Activated B cell treated with CpG ODN at 0.5 μM for 24 hours (primary cell): ENCODE measurements at regions of chr15 and their contacts with region 1.

Region 1: GRCh38 chr15:80058851-80059785 is at the start of gene ZFAND6:
- DNase-seq: peak; percentile 98
- ATAC-seq: peak; percentile 83
- H3K4me3 Mint-ChIP-seq: peak within 1 kb of the TSS; percentile 92
- H3K27ac Mint-ChIP-seq: peak within 1 kb of the TSS; percentile 92
- H3K4me1 Mint-ChIP-seq: peaks cover 51% of the 10 kb centered on the region
- H3K27me3 Mint-ChIP-seq: no peaks in the 10 kb centered on the region
- CTCF ChIP-seq: no peak
- total RNA-seq, gene ZFAND6: 95.5 and 101 TPM in 2 replicates

Region 2: DNA sequence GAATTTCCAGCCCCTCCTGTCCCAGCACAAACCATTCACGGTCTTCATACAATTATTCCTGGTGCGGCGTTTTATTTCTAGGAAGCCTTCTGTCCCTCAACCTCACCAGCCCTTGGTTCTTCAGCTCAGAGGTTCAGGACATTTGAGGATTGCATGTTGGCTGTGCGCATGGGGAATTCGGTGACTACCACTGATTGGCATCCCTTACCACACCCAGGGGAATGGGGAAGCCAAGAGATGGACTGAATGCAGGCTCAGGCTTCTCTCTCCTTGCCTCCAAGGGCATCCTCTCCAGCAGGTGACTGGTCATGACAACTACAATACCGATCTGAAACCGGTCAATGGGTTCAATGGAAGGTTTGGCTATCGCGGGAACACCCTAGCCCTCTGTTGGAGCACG is 316.1 kb before region 1 on chr15:
- CTCF ChIA-PET with region 1: no interaction called
- POLR2A ChIA-PET with region 1: no interaction called
- intact Hi-C with region 1: no loop called
- DNase-seq: no peak
- ATAC-seq: no peak
- H3K4me3 Mint-ChIP-seq: no peak overlapping the region
- H3K27ac Mint-ChIP-seq: no peak overlapping the region
- H3K4me1 Mint-ChIP-seq: no peaks in the 10 kb centered on the region
- H3K27me3 Mint-ChIP-seq: peaks cover 2% of the 10 kb centered on the region
- CTCF ChIP-seq: no peak

Region 3: DNA sequence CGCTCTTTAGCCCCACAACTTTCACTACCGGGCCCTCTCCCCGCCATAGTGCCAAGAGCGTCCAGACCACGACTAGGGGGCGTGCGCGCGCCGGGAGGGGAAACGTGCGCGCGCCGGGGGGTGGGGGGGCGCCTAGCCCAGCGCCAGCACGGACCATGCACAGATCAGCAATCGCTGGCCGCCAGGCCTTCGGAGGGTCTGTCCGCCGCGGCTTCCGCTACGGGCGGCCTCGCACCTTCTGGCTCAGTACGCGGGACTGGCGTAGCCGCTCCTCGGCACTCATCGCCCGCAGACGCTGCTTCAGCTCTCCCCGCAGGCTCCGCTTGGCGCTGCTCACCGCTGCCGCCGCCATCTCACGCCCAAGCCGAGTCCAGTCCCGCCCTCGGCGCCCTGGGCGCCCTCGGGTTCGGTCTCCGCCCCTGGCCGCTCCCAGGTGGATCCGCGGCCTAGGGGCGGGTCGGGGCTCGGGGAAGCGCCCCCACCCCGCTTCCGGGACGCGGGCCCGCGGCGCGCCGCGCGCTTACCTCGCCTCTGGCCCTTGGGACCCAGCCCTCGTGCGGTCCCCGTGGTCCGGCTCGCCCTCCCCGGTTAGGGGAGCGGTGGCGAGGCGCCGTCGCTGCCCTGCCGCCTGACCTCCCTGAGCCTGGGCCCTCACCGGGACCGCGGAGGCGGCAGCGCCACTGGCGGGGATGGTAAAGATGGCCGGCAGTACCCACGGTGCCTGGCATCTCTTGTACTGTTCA is 162.3 kb before region 1 on chr15 and contains the start of gene MTHFS:
- CTCF ChIA-PET with region 1: no interaction called
- POLR2A ChIA-PET with region 1: interaction called, 4 read pairs
- intact Hi-C with region 1: loop called (anchors 2 kb)
- DNase-seq: peak; percentile 76
- ATAC-seq: peak; percentile 87
- H3K4me3 Mint-ChIP-seq: peak within 1 kb of the TSS; percentile 99
- H3K27ac Mint-ChIP-seq: peak within 1 kb of the TSS; percentile 100
- H3K4me1 Mint-ChIP-seq: peaks cover 54% of the 10 kb centered on the region
- H3K27me3 Mint-ChIP-seq: no peaks in the 10 kb centered on the region
- CTCF ChIP-seq: no peak
- total RNA-seq, gene MTHFS: 28.6 and 29.5 TPM in 2 replicates

Region 4: DNA sequence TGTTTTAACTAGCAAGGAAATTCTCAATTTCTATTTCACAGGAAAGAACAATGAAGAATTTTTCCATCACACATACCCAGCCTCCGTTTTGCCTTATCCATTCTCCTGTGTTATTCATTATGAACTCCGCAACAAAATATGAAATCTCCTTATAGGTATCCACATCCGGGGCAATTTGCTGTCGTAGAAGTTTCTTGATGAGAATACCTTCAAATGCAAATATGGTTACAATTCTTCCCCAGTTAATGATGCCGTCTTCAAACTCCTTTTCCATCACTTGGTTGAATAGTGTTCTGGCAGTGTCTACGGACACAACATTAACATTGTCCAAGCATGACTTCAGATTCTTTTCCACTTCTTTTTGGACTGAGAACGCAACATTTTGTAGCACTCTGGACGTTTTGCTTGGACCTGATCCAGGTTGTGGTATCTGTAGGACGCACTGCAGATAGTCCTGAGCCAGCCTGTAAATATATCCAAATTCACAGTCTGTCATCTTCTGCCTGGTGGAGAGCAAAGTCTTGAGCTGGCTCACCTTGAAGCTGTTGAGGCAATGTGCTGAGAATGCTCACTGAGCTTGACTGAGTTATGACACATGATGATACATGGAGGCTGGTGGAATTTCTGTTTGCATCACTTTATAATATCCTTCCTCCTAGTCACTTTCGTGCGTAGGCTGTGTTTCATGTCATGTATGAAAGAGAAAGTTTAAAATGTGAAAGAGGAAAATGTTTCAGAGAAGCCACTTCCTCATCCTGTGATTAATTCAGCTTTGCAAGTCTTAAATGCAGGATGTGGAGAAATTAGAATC is 88.3 kb before region 1 on chr15 and contains the start of gene BCL2A1:
- CTCF ChIA-PET with region 1: no interaction called
- POLR2A ChIA-PET with region 1: interaction called, 12 read pairs
- intact Hi-C with region 1: loop called (anchors 2 kb)
- DNase-seq: peak; percentile 33
- ATAC-seq: peak; percentile 83
- H3K4me3 Mint-ChIP-seq: peak within 1 kb of the TSS; percentile 89
- H3K27ac Mint-ChIP-seq: peak within 1 kb of the TSS; percentile 93
- H3K4me1 Mint-ChIP-seq: peaks cover 61% of the 10 kb centered on the region
- H3K27me3 Mint-ChIP-seq: no peaks in the 10 kb centered on the region
- CTCF ChIP-seq: no peak
- total RNA-seq, gene BCL2A1: 181 and 189 TPM in 2 replicates

Region 5: DNA sequence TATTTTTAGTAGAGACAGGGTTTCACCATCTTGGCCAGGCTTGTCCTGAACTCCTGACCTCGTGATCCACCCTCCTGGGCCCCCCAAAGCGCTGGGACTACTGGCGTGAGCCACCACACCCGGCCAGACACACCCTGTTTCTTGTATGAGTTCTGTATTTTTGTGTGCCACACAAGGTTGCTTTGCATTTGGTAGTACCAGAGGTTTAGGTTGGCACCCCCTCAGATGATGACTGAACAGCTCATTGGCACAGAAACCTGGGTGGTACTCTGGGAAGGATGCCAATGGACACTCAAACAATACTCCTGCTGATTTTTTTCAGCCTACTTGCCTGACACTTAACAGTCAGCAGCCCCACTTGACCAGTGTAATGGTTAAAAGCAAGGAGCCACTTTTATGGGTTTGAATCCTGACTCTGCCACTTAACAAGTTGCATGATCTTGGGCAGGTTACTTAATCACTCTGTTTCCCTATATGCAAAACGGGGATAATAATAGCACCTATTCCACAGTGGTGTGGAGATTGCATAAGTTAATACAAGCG is 48.9 kb before region 1 on chr15:
- CTCF ChIA-PET with region 1: interaction called, 3 read pairs
- POLR2A ChIA-PET with region 1: interaction called, 39 read pairs
- intact Hi-C with region 1: loop called (anchors 2 kb)
- DNase-seq: no peak
- ATAC-seq: peak; percentile 56
- H3K4me3 Mint-ChIP-seq: peak overlapping the region; percentile 57
- H3K27ac Mint-ChIP-seq: peak overlapping the region; percentile 87
- H3K4me1 Mint-ChIP-seq: peaks cover 73% of the 10 kb centered on the region
- H3K27me3 Mint-ChIP-seq: no peaks in the 10 kb centered on the region
- CTCF ChIP-seq: no peak

Region 6: GRCh38 chr15:80031841-80032240 is 27.3 kb before region 1 on chr15:
- CTCF ChIA-PET with region 1: no interaction called
- POLR2A ChIA-PET with region 1: interaction called, 29 read pairs
- intact Hi-C with region 1: no loop called
- DNase-seq: no peak
- ATAC-seq: peak; percentile 51
- H3K4me3 Mint-ChIP-seq: peak overlapping the region; percentile 55
- H3K27ac Mint-ChIP-seq: no peak overlapping the region
- H3K4me1 Mint-ChIP-seq: peaks cover 41% of the 10 kb centered on the region
- H3K27me3 Mint-ChIP-seq: no peaks in the 10 kb centered on the region
- CTCF ChIP-seq: no peak

Region 7: DNA sequence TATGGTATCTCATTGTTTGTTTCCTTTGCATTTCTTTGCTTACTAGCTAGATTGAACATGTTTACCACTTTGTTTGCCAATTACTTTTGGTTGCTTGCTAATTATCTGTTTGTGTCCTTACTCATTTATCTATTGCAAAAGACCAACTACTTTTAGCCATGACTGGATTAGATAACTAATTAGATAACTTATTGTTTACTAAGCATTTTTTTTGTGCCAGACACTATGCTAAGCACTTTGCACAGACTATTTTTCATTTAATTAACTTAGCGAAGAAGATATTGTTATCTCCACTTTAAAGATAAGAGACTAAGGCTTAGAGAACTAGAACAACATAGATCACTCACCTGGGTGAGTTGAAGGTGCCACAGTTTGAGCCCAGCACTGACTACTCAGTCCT is 16.6 kb before region 1 on chr15:
- CTCF ChIA-PET with region 1: no interaction called
- POLR2A ChIA-PET with region 1: no interaction called
- intact Hi-C with region 1: no loop called
- DNase-seq: no peak
- ATAC-seq: no peak
- H3K4me3 Mint-ChIP-seq: no peak overlapping the region
- H3K27ac Mint-ChIP-seq: no peak overlapping the region
- H3K4me1 Mint-ChIP-seq: no peaks in the 10 kb centered on the region
- H3K27me3 Mint-ChIP-seq: no peaks in the 10 kb centered on the region
- CTCF ChIP-seq: no peak

Region 8: GRCh38 chr15:80081390-80081789 is 22.3 kb after region 1 on chr15:
- CTCF ChIA-PET with region 1: no interaction called
- POLR2A ChIA-PET with region 1: interaction called, 11 read pairs
- intact Hi-C with region 1: loop called (anchors 2 kb)
- DNase-seq: no peak
- ATAC-seq: peak; percentile 96
- H3K4me3 Mint-ChIP-seq: no peak overlapping the region
- H3K27ac Mint-ChIP-seq: peak overlapping the region; percentile 16
- H3K4me1 Mint-ChIP-seq: peaks cover 53% of the 10 kb centered on the region
- H3K27me3 Mint-ChIP-seq: no peaks in the 10 kb centered on the region
- CTCF ChIP-seq: no peak

Region 9: GRCh38 chr15:80152180-80152845 is 93.2 kb after region 1 on chr15:
- CTCF ChIA-PET with region 1: no interaction called
- POLR2A ChIA-PET with region 1: interaction called, 3 read pairs
- intact Hi-C with region 1: loop called (anchors 1 kb)
- DNase-seq: peak; percentile 66
- ATAC-seq: peak; percentile 87
- H3K4me3 Mint-ChIP-seq: peak overlapping the region; percentile 86
- H3K27ac Mint-ChIP-seq: peak overlapping the region; percentile 68
- H3K4me1 Mint-ChIP-seq: peaks cover 15% of the 10 kb centered on the region
- H3K27me3 Mint-ChIP-seq: no peaks in the 10 kb centered on the region
- CTCF ChIP-seq: no peak